GM10248 (cell line): ENCODE measurements at regions of chr12 and their contacts with region 1.

Region 1: DNA sequence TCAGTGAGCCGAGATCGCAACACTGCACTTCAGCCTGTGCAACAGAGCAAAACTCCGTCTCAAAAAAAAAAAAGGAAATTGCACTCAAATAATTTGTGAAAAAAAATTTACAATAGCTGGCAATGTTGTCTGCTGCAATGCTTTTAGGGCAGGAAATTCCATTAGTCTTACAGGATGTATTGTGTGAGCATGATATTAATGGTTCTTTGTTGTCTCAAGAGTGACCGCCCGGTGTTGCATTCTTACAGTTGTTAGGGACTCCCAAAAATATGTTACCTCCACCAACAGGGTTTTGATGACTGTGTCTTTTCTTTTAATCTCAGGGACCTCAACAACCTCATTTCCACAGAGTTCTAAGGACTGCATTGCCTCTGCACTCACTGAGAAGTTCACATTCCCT is 44.8 kb downstream of the PZP start:
- DNase-seq: no peak
- CTCF ChIP-seq: no peak

Region 2: DNA sequence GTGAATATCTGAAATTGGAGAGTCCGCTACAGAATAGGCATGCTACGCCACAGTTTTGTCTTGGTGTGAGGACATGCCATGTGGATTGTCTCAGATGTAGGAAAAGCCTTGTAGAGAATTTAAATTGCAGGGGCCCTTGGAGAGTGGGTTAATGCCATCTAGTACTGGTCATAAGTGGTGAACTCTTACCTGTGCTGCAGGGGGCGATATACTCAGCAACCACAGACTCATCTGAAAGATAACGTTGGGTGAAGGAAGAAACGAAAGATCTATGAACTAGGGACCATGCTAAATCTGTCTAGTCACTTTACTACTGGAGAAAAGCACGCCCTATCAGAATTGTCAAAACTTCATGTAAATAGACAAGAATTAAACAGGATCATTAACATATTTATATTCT is 14.0 kb before region 1 on chr12:
- CTCF ChIA-PET with region 1: interaction called, 10 read pairs
- POLR2A ChIA-PET with region 1: no interaction called
- DNase-seq: no peak
- CTCF ChIP-seq: no peak